ENCODE measurements at regions of chr12 and their contacts with region 1.

Region 1: DNA sequence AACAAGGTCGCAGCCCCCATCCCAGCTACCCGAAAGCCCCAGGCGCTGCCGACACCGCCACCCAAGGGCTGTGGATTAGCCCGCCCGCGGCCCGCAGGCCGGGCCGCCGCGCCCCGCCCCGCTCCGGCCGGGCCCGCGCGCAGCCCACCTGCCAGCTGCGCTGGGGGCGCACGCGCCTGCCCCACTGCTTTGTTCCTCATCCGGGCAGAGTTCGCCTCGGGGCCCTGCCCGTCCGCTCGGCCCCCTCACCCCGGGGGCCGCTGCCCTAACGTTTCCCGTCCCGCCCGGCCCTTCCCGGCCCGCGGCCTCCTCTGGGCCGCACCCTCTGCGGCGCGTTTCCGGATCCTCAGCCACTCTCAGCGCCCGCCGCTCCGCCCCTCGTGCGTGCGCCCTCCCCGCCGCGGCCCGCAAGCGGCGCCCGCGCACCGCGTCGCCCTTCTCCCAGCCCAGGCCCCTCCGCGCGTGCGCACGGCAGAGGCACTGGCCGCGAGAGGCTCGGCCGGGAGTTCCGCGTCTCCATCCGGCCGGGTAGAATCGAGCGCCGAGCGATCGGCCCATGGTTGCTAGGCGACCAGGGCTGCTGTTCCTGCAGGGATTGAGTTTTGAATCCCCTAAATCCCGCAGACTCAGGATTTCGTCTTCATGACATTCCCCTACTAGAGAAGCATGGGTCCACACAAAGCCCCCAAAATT is at the start of gene PRDM4:
- DNase-seq: peak; percentile 87 to 94 (median 93)
- H3K4me3 ChIP-seq: peak within 1 kb of the TSS; percentile 77 to 82
- H3K4me3 Mint-ChIP-seq: peak within 1 kb of the TSS; percentile 89 to 95 (median 92)
- H3K27ac ChIP-seq: peak within 1 kb of the TSS; percentile 64
- H3K27ac Mint-ChIP-seq: peak within 1 kb of the TSS; percentile 90 to 98 (median 94)
- H3K4me1 ChIP-seq: peaks cover 41% of the 10 kb centered on the region
- H3K4me1 Mint-ChIP-seq: peaks cover 17 to 45% (median 26%) of the 10 kb centered on the region in 4 donors
- H3K27me3 ChIP-seq: no peaks in the 10 kb centered on the region
- H3K27me3 Mint-ChIP-seq: no peaks in the 10 kb centered on the region
- total RNA-seq, gene PRDM4: 35.8 to 38.3 TPM

Region 2: GRCh38 chr12:107685360-107686248 is 75.4 kb before region 1 on chr12 and contains the start of gene PWP1:
- CTCF ChIA-PET with region 1: no interaction called
- POLR2A ChIA-PET with region 1: interaction called, 8 read pairs
- intact Hi-C with region 1: loop called (anchors 1 kb)
- DNase-seq: peak; percentile 94 to 97 (median 95)
- H3K4me3 ChIP-seq: peak within 1 kb of the TSS; percentile 94 to 98
- H3K4me3 Mint-ChIP-seq: peak within 1 kb of the TSS; percentile 96 to 99 (median 97)
- H3K27ac ChIP-seq: peak within 1 kb of the TSS; percentile 78
- H3K27ac Mint-ChIP-seq: peak within 1 kb of the TSS; percentile 94 to 100 (median 98)
- H3K4me1 ChIP-seq: peaks cover 25% of the 10 kb centered on the region
- H3K4me1 Mint-ChIP-seq: peaks cover 14 to 37% (median 26%) of the 10 kb centered on the region in 4 donors
- H3K27me3 ChIP-seq: no peaks in the 10 kb centered on the region
- H3K27me3 Mint-ChIP-seq: no peaks in the 10 kb centered on the region
- total RNA-seq, gene PWP1: 24.3 to 25.6 TPM

Region 3: GRCh38 chr12:107884769-107885694 is 124.1 kb after region 1 on chr12:
- CTCF ChIA-PET with region 1: no interaction called
- POLR2A ChIA-PET with region 1: no interaction called
- intact Hi-C with region 1: loop called (anchors 2 kb)
- DNase-seq: peak in 4 of 5 donors; percentile 6 to 21 (median 18)
- H3K4me3 ChIP-seq: no peak overlapping the region
- H3K4me3 Mint-ChIP-seq: no peak overlapping the region
- H3K27ac ChIP-seq: no peak overlapping the region
- H3K27ac Mint-ChIP-seq: peak overlapping the region in 2 of 7 donors; percentile 15 to 28
- H3K4me1 ChIP-seq: no peaks in the 10 kb centered on the region
- H3K4me1 Mint-ChIP-seq: peaks cover 0 to 2% (median 0%) of the 10 kb centered on the region in 4 donors
- H3K27me3 ChIP-seq: no peaks in the 10 kb centered on the region
- H3K27me3 Mint-ChIP-seq: peaks cover 6 to 21% of the 10 kb centered on the region in 2 donors

Region 4: GRCh38 chr12:107929436-107929835 is 168.5 kb after region 1 on chr12:
- CTCF ChIA-PET with region 1: no interaction called
- POLR2A ChIA-PET with region 1: no interaction called
- intact Hi-C with region 1: no loop called
- DNase-seq: no peak
- H3K4me3 ChIP-seq: no peak overlapping the region
- H3K4me3 Mint-ChIP-seq: no peak overlapping the region
- H3K27ac ChIP-seq: no peak overlapping the region
- H3K27ac Mint-ChIP-seq: no peak overlapping the region
- H3K4me1 ChIP-seq: no peaks in the 10 kb centered on the region
- H3K4me1 Mint-ChIP-seq: peaks cover 0 to 2% (median 0%) of the 10 kb centered on the region in 4 donors
- H3K27me3 ChIP-seq: peaks cover 5% of the 10 kb centered on the region
- H3K27me3 Mint-ChIP-seq: peaks cover 21 to 22% of the 10 kb centered on the region in 2 donors

Measured in CD4-positive, alpha-beta memory T cell (primary cell).